ENCODE measurements at regions of chr12 and their contacts with region 1.

Region 1: DNA sequence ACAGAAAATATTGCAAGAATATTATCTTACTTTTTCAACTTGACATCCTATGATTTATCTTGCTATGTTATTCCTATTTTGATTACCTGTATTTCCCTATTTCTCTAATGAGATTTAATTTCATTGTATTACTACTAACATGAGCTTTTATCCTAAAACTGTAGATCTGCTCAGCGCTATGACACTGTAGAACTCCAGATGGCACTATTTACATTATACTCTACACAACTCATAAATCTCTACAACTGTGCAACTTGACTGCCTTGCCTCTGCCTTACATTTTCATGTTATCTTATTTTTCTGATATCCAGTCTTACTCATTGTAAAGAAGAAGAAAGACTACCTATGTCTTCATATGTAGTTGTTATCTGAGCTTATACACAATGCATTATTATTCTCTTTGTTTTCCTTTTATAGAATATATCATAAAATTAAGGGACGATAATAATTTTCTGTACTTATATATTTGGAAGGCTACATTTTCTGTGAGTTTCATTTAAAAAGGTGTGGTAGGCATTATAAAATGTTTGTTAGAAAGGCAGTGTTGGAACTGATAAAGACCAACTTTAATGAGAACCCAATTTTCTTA is 24.1 kb downstream of the NUP37 start:
- DNase-seq: no peak
- H3K4me3 ChIP-seq: no peak overlapping the region
- H3K27ac ChIP-seq: no peak overlapping the region
- H3K4me1 ChIP-seq: no peaks in the 10 kb centered on the region
- H3K27me3 ChIP-seq: no peaks in the 10 kb centered on the region
- CTCF ChIP-seq: no peak
- EP300 ChIP-seq: no peak
- POLR2A ChIP-seq: no peak

Region 2: GRCh38 chr12:102479099-102479887 is 383.5 kb after region 1 on chr12:
- intact Hi-C with region 1: loop called in 1 of 4 experiments (anchors 5 kb)
- DNase-seq: no peak
- H3K4me3 ChIP-seq: peak overlapping the region; percentile 37
- H3K27ac ChIP-seq: no peak overlapping the region
- H3K4me1 ChIP-seq: peaks cover 4% of the 10 kb centered on the region
- H3K27me3 ChIP-seq: no peaks in the 10 kb centered on the region
- CTCF ChIP-seq: no peak
- EP300 ChIP-seq: no peak
- POLR2A ChIP-seq: no peak